Caco-2 (cell line): ENCODE measurements at regions of chr5 and their contacts with region 1.

Region 1: GRCh38 chr5:54807421-54807820 is 178.0 kb downstream of the ESM1 start:
- DNase-seq: no peak
- H3K4me3 ChIP-seq: no peak overlapping the region
- H3K4me3 Mint-ChIP-seq: no peak overlapping the region
- H3K27ac Mint-ChIP-seq: peak overlapping the region; percentile 38
- H3K4me1 ChIP-seq: peaks cover 7% of the 10 kb centered on the region; the same call in 1 of the 2 replicates
- H3K4me1 Mint-ChIP-seq: no peaks in the 10 kb centered on the region
- H3K27me3 ChIP-seq: no peaks in the 10 kb centered on the region
- H3K27me3 Mint-ChIP-seq: peaks cover 3% of the 10 kb centered on the region
- CTCF ChIP-seq: no peak

Region 2: GRCh38 chr5:54820346-54821134 is 13.1 kb after region 1 on chr5:
- CTCF ChIA-PET with region 1: no interaction called
- POLR2A ChIA-PET with region 1: no interaction called
- intact Hi-C with region 1: no loop called
- DNase-seq: no peak
- H3K4me3 ChIP-seq: no peak overlapping the region
- H3K4me3 Mint-ChIP-seq: no peak overlapping the region
- H3K27ac Mint-ChIP-seq: peak overlapping the region; percentile 22
- H3K4me1 ChIP-seq: peaks cover 22% of the 10 kb centered on the region
- H3K4me1 Mint-ChIP-seq: peaks cover 11% of the 10 kb centered on the region
- H3K27me3 ChIP-seq: no peaks in the 10 kb centered on the region
- H3K27me3 Mint-ChIP-seq: peaks cover 4% of the 10 kb centered on the region
- CTCF ChIP-seq: no peak

Region 3: DNA sequence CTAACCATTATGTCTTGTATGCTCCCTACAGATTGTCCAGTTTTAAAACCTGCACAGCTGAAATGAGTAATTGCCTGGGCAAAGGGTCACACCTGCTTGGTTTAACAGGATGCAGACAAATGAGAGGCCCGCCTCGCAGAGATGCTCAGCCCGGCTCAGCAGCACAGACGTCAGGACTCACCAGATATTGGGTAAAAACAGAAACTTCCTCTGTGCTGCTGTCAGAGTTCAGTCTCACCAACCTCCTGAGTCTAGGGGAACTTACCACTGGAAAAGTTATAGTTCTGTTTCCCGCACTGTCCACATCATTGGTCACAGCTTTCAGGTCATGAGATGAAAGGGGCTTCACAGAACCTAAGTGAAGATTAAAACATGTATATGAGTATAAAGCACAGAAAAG is 25.4 kb after region 1 on chr5:
- CTCF ChIA-PET with region 1: no interaction called
- POLR2A ChIA-PET with region 1: no interaction called
- intact Hi-C with region 1: loop called (anchors 1 kb)
- DNase-seq: no peak
- H3K4me3 ChIP-seq: no peak overlapping the region
- H3K4me3 Mint-ChIP-seq: no peak overlapping the region
- H3K27ac Mint-ChIP-seq: no peak overlapping the region
- H3K4me1 ChIP-seq: peaks cover 15% of the 10 kb centered on the region
- H3K4me1 Mint-ChIP-seq: peaks cover 12% of the 10 kb centered on the region
- H3K27me3 ChIP-seq: no peaks in the 10 kb centered on the region
- H3K27me3 Mint-ChIP-seq: no peaks in the 10 kb centered on the region
- CTCF ChIP-seq: no peak